Esophagus muscularis mucosa (tissue), 4 donors: ENCODE measurements at regions of chr5 and their contacts with region 1.

Region 1: DNA sequence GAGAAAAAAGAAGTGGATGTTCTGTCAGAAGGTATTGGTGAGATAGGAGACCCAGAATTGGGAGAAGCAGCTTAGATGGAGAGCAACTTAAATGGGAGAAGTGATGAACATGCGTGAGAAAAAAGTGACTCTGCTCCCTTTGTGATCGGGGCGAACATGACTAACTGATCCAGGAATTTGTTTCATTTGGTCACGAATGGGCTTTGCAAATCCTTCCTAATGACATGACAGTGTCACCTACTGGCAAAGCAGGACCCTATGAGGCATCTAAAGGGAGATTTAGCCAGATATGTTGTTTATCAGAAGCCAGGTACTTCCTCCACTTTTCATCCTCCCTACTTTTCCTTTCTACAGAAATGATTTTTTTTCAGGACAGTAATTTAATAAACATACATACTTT is 787.4 kb upstream of the RGMB start:
- DNase-seq: no peak
- H3K4me3 ChIP-seq: no peak overlapping the region
- H3K27ac ChIP-seq: no peak overlapping the region
- H3K4me1 ChIP-seq: no peaks in the 10 kb centered on the region
- H3K27me3 ChIP-seq: no peaks in the 10 kb centered on the region
- CTCF ChIP-seq: no peak
- EP300 ChIP-seq: no peak
- POLR2A ChIP-seq: no peak

Region 2: GRCh38 chr5:97714424-97714823 is 271.6 kb before region 1 on chr5:
- intact Hi-C with region 1: no loop called
- DNase-seq: no peak
- H3K4me3 ChIP-seq: no peak overlapping the region
- H3K27ac ChIP-seq: no peak overlapping the region
- H3K4me1 ChIP-seq: no peaks in the 10 kb centered on the region
- H3K27me3 ChIP-seq: no peaks in the 10 kb centered on the region
- CTCF ChIP-seq: no peak
- EP300 ChIP-seq: no peak
- POLR2A ChIP-seq: no peak

Region 3: GRCh38 chr5:97998941-97999340 is 12.9 kb after region 1 on chr5:
- intact Hi-C with region 1: loop called (anchors 2 kb)
- DNase-seq: no peak
- H3K4me3 ChIP-seq: no peak overlapping the region
- H3K27ac ChIP-seq: no peak overlapping the region
- H3K4me1 ChIP-seq: peaks cover 0 to 17% (median 11%) of the 10 kb centered on the region in 4 donors
- H3K27me3 ChIP-seq: no peaks in the 10 kb centered on the region
- CTCF ChIP-seq: no peak
- EP300 ChIP-seq: no peak
- POLR2A ChIP-seq: no peak

Region 4: DNA sequence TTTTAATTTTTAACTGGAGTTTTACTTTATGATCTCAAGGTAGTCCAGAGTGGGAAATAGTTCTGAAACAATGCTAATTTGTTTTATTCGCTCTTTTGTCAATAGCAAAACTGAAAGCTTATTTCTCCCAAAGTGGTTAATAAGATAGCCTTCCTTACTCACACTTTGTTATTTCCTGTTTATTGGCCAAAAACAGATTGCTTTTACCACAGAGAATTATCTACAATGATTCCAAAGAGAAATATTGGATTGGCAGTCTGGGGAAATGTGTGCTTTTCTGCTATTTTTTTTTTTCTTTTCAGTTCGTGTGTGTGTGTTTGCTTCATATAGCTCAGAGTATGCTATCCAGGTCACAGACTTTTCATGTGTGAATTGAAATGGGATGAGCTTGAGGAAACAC is 30.7 kb after region 1 on chr5:
- intact Hi-C with region 1: no loop called
- DNase-seq: no peak
- H3K4me3 ChIP-seq: no peak overlapping the region
- H3K27ac ChIP-seq: no peak overlapping the region
- H3K4me1 ChIP-seq: peaks cover 0 to 9% (median 4%) of the 10 kb centered on the region in 4 donors
- H3K27me3 ChIP-seq: no peaks in the 10 kb centered on the region
- CTCF ChIP-seq: no peak
- EP300 ChIP-seq: no peak
- POLR2A ChIP-seq: no peak